ENCODE measurements at regions of chr12 and their contacts with region 1.

Region 1: DNA sequence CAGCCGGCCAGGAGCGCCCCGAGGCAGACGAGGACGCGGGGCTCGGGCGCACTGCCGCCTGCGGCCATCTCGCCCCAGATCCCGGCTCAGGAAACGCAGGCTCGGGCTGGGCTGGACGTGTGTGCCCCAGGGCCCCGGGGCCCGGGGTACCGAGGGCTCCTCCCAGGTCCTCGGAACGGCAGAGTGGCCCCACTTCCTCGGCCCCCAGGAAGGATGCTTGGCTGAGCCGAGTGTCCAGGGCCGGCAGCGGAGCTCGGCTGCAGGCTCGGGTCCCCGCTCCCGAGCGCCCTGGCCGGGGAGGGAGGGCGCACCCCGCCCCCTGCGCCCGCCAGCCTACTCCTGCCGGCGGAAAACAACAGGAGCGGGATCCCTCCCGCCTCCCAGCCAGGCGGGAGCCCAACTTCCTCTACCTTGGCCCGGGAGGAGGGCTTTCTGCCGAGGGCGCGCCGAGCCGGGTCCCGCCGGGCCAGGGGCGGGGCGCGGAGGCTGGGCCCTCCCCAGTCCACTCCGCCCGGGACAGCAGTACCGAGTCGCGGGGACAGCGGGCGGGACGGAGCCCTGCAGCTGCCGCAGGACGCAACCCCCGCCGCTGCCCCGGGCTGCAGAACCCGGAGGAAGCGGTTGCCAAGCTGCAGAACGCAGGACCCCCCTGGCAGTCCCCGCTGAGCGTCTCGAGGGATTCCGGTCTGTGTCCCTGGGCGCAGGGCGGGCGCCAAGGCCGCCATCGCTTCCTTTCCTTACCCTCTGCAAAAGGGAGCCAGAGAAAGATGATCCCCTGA is at the start of gene VSIG10:
- DNase-seq: peak; percentile 87
- H3K4me3 Mint-ChIP-seq: peak within 1 kb of the TSS; percentile 77
- H3K27ac Mint-ChIP-seq: peak within 1 kb of the TSS; percentile 64
- H3K4me1 Mint-ChIP-seq: peaks cover 41% of the 10 kb centered on the region
- H3K27me3 Mint-ChIP-seq: no peaks in the 10 kb centered on the region
- CTCF ChIP-seq: no peak
- total RNA-seq, gene VSIG10: 52.0 and 53.6 TPM in 2 replicates

Region 2: DNA sequence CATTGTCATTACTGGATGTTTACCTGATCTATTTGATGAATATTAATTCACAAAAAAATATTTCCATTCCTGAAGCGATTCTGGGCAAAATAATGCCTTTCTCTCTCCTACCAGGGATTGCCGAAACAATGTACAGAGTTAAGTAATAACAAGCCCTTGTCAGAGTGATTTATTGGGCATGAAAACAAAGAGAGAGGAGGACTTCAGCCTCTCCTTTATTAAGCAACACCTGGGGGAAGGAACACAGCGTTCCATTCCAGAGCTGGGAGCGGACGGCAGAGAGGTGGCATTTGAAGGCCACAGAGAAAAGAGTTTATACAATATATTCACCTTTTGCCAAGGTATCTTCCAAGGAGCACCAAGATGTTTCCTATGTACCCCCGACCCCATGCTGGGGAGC is 300.8 kb before region 1 on chr12:
- CTCF ChIA-PET with region 1: no interaction called
- intact Hi-C with region 1: no loop called
- DNase-seq: peak; percentile 4
- H3K4me3 Mint-ChIP-seq: no peak overlapping the region
- H3K27ac Mint-ChIP-seq: no peak overlapping the region
- H3K4me1 Mint-ChIP-seq: no peaks in the 10 kb centered on the region
- H3K27me3 Mint-ChIP-seq: no peaks in the 10 kb centered on the region
- CTCF ChIP-seq: no peak

Region 3: DNA sequence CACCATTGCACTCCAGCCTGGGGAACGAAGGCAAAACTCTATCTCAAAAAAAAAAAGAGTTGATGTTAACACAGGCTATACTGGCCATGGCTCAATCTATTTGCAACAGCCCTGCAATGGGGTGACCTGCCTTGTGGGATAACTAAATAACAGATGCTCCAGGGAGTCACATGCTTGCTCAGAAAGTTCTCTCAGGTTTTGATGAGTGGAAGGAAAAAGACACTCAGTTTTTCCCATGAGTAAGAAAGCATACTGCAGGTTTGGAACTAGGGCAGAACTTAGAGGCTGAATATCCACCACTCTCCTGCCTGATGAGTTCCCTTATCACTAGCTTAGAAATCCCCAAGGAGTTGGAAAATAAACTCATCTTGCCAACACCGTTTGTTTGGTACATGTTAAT is 59.7 kb before region 1 on chr12:
- CTCF ChIA-PET with region 1: no interaction called
- intact Hi-C with region 1: no loop called
- DNase-seq: no peak
- H3K4me3 Mint-ChIP-seq: no peak overlapping the region
- H3K27ac Mint-ChIP-seq: no peak overlapping the region
- H3K4me1 Mint-ChIP-seq: no peaks in the 10 kb centered on the region
- H3K27me3 Mint-ChIP-seq: no peaks in the 10 kb centered on the region
- CTCF ChIP-seq: no peak

Region 4: DNA sequence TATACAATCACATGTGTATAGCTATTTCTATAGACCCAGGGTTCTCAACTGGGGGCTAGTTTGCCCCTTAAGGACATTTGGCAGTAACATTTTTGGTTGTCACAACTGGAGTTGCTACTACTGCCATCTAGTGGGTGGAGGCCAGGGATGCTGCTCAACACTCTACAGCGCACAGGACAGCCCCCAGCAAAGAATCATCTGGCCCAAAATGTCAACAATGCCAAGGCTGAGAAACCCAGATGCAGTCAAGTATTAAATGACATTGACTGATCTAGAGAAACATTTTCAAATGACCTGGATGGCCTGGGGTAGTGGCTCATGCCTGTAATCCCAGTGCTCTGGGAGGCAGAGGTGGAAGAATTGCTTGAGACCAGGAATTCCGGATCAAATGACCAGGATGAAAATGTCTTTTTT is 48.6 kb before region 1 on chr12:
- CTCF ChIA-PET with region 1: interaction called, 3 read pairs
- intact Hi-C with region 1: loop called (anchors 5 kb)
- DNase-seq: peak; percentile 62
- H3K4me3 Mint-ChIP-seq: no peak overlapping the region
- H3K27ac Mint-ChIP-seq: no peak overlapping the region
- H3K4me1 Mint-ChIP-seq: peaks cover 62% of the 10 kb centered on the region
- H3K27me3 Mint-ChIP-seq: no peaks in the 10 kb centered on the region
- CTCF ChIP-seq: peak; percentile 64

Region 5: GRCh38 chr12:118611295-118611694 is 507.5 kb after region 1 on chr12:
- CTCF ChIA-PET with region 1: no interaction called
- intact Hi-C with region 1: no loop called
- DNase-seq: no peak
- H3K4me3 Mint-ChIP-seq: no peak overlapping the region
- H3K27ac Mint-ChIP-seq: no peak overlapping the region
- H3K4me1 Mint-ChIP-seq: no peaks in the 10 kb centered on the region
- H3K27me3 Mint-ChIP-seq: peaks cover 38% of the 10 kb centered on the region
- CTCF ChIP-seq: no peak